Left cardiac atrium (tissue), 4 donors: ENCODE measurements at regions of chr6 and their contacts with region 1.

Region 1: DNA sequence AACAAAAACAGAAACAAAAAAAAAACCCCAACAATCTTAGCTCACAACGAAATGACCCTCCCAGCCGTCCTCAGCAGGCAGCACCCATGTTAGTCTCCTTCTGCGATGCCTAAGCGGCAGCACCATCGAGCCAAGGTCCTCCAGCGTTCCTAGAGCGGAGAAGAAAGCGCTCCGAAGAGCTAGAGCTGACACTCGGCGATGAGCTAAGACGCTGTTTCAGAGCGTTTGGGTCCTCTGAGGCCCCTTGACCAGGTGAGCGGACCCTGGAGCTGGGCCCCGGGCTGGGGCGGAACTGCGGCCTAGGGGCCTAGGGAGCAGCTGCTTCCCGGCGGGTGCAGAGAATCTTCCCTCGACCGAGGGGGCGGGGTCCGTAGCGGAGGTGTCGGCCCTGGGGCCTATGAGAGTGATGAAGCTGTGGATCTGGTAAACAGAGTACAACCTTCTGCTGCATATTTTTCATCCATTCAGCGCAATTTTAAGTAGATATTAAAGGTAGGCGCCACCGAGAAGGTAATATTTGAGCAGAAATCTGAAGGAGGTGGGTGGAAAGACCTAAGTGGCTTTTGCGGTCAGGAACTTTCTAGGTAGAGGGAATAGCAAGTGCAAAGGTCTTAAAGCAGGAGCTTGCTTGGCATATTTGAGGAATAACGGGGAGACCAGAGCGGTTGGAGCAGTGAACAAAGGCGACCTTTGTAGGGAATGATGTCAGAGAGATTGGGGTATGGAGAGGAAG is at the start of gene ZSCAN26:
- DNase-seq: peak; percentile 87
- ATAC-seq: peak; percentile 98
- total RNA-seq, gene ZSCAN26: 8.8 to 11.9 TPM

Region 2: GRCh38 chr6:28334286-28335039 is 67.3 kb after region 1 on chr6:
- intact Hi-C with region 1: loop called in 1 of 2 experiments (anchors 5 kb)
- DNase-seq: no peak
- ATAC-seq: no peak